ENCODE measurements at regions of chr2 and their contacts with region 1.

Region 1: GRCh38 chr2:55419679-55420438 is at the start of gene CCDC88A:
- DNase-seq: peak; percentile 96 to 99 (median 98)
- ATAC-seq: peak; percentile 94 to 99 (median 98)
- H3K4me3 ChIP-seq: peak within 1 kb of the TSS; percentile 71 to 94 (median 86)
- H3K27ac ChIP-seq: peak within 1 kb of the TSS; percentile 66 to 94 (median 88)
- H3K4me1 ChIP-seq: peaks cover 0 to 50% (median 15%) of the 10 kb centered on the region in 12 donors
- H3K27me3 ChIP-seq: no peaks in the 10 kb centered on the region
- CTCF ChIP-seq: peak in 11 of 12 donors; percentile 5 to 53 (median 22)
- POLR2A ChIP-seq: peak; percentile 23 to 78
- total RNA-seq, gene CCDC88A: 17.3 to 53.6 (median 24.4) TPM

Region 2: GRCh38 chr2:55232084-55232862 is 187.6 kb before region 1 on chr2 and contains the starts of genes CLHC1 and RPS27A:
- intact Hi-C with region 1: loop called in 1 of 10 experiments (anchors 5 kb)
- DNase-seq: peak; percentile 91 to 95 (median 93)
- ATAC-seq: peak; percentile 94 to 97 (median 96)
- H3K4me3 ChIP-seq: peak within 1 kb of the TSS; percentile 73 to 96 (median 86)
- H3K27ac ChIP-seq: peak within 1 kb of the TSS; percentile 84 to 98 (median 92)
- H3K4me1 ChIP-seq: peaks cover 0 to 47% (median 17%) of the 10 kb centered on the region in 12 donors
- H3K27me3 ChIP-seq: no peaks in the 10 kb centered on the region
- CTCF ChIP-seq: no peak
- POLR2A ChIP-seq: peak in 1 of 2 donors; percentile 72
- total RNA-seq, gene CLHC1: 2.3 to 10.6 (median 5.6) TPM
- total RNA-seq, gene RPS27A: 329 to 749 (median 488) TPM

Region 3: DNA sequence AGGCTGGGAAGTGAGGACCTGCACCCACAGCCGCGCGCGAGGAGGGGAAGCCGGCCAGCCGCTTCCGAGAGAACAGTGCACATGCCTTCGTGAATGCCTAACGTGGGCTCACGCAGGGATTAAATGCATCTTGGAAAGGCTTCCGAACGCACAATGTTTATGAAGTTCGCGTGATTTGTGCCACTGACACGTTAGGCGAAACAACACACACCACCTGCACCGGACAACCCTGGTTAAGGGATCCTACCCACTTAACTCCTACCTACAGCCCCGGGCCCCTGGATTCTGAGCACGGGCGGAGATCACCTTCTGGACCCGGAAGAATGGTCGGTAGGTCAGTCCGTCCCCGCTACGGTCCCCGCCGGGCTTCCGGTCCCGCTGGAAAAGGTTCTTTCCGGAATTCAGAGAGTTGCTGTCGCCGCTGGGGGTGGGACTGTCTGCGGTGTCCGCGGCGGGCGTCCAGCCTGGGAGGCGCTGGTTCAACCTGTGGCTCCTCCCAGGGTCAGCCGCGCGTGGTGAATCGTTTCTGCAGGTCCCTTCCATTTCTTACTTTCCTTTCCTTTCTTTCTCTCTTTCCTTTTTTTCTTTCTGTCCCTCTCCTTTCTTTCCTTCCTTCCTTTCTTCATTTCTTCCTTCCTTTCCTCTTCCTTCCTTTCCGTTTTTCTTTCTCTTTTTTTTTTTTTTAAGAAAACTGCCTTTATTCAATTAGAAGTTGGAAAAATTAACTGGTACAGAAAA is 150.8 kb before region 1 on chr2 and contains the start of gene MTIF2:
- intact Hi-C with region 1: loop called in 1 of 10 experiments (anchors 5 kb)
- DNase-seq: peak; percentile 95 to 97 (median 97)
- ATAC-seq: peak; percentile 99 to 100 (median 100)
- H3K4me3 ChIP-seq: peak within 1 kb of the TSS; percentile 54 to 93 (median 74)
- H3K27ac ChIP-seq: peak within 1 kb of the TSS; percentile 77 to 93 (median 88)
- H3K4me1 ChIP-seq: peaks cover 0 to 20% (median 12%) of the 10 kb centered on the region in 12 donors
- H3K27me3 ChIP-seq: no peaks in the 10 kb centered on the region
- CTCF ChIP-seq: peak in 3 of 12 donors; percentile 13 to 39 (median 39)
- POLR2A ChIP-seq: peak in 1 of 2 donors; percentile 52
- total RNA-seq, gene MTIF2: 38.3 to 54.7 (median 45.5) TPM

Region 4: DNA sequence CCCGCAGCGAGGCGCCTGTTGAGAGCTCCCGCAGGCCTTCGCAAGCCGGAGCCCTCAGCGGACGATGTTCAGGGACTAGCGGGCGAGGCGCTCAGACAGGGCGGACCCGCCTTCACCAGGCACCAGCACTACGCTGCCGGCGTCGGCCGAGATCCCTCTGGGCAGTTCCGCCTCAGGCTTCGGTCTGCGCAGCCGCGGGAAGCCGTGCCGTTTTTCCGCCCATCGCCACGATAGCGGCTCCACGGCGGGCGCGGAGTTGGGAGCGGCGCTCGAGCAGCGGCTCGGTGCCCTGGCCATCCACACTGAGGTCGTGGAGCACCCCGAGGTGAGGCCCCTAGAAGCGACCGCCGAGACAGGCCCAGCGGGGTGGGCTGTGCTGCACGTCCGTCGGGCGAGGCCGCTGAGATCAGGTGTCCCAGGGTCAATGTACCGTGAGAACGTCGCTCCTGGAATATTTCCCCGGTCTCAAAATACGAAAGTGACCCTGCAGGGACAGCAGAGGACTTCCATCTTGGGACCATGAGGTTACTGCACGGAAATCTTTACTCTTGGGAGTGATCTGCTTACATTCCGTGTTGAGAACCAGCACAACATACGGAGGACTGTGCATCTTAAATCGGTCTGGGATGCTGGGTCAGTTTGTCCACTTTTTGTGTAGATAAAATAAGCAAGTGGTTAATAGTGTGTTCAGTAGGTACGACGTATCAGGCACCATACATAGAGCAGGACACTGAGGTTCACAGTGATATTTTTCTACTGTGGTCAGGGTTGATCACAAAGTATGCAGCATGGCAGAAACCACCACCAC is 137.5 kb before region 1 on chr2:
- intact Hi-C with region 1: loop called in 5 of 10 experiments (anchors 5 to 10 kb)
- DNase-seq: peak; percentile 88 to 97 (median 95)
- ATAC-seq: peak; percentile 91 to 98 (median 98)
- H3K4me3 ChIP-seq: peak overlapping the region; percentile 43 to 96 (median 77)
- H3K27ac ChIP-seq: peak overlapping the region; percentile 83 to 98 (median 92)
- H3K4me1 ChIP-seq: peaks cover 0 to 25% (median 14%) of the 10 kb centered on the region in 12 donors
- H3K27me3 ChIP-seq: no peaks in the 10 kb centered on the region
- CTCF ChIP-seq: peak in 1 of 12 donors; percentile 15
- POLR2A ChIP-seq: peak in 1 of 2 donors; percentile 80

Region 5: GRCh38 chr2:55364189-55365055 is 55.4 kb before region 1 on chr2:
- intact Hi-C with region 1: loop called in 1 of 10 experiments (anchors 10 kb)
- DNase-seq: peak in 2 of 5 donors; percentile 42 to 46
- ATAC-seq: peak in 3 of 4 donors; percentile 88 to 93 (median 88)
- H3K4me3 ChIP-seq: no peak overlapping the region
- H3K27ac ChIP-seq: peak overlapping the region in 5 of 12 donors; percentile 3 to 45 (median 27)
- H3K4me1 ChIP-seq: peaks cover 0 to 27% (median 1%) of the 10 kb centered on the region in 12 donors
- H3K27me3 ChIP-seq: no peaks in the 10 kb centered on the region
- CTCF ChIP-seq: no peak
- POLR2A ChIP-seq: no peak

Region 6: GRCh38 chr2:55519938-55520885 is 100.4 kb after region 1 on chr2:
- intact Hi-C with region 1: loop called in 3 of 10 experiments (anchors 1 to 5 kb)
- DNase-seq: peak in 1 of 5 donors; percentile 16
- ATAC-seq: peak in 3 of 4 donors; percentile 3 to 29 (median 27)
- H3K4me3 ChIP-seq: peak overlapping the region; percentile 66 to 90 (median 80)
- H3K27ac ChIP-seq: peak overlapping the region; percentile 29 to 90 (median 78)
- H3K4me1 ChIP-seq: peaks cover 0 to 18% (median 7%) of the 10 kb centered on the region in 12 donors
- H3K27me3 ChIP-seq: no peaks in the 10 kb centered on the region
- CTCF ChIP-seq: no peak
- POLR2A ChIP-seq: no peak

Measured in heart left ventricle (tissue), 16 donors.